Activated CD4-positive, alpha-beta memory T cell treated with anti-CD3 and anti-CD28 coated beads, Interleukin-2, amount 10 ng/mL, durations not matched to agents 7 days and 5 days (primary cell): ENCODE measurements at regions of chr5 and their contacts with region 1.

Region 1: GRCh38 chr5:159106569-159107282 is 7.0 kb upstream of the EBF1 start:
- DNase-seq: peak; percentile 72
- H3K4me3 Mint-ChIP-seq: peak overlapping the region; percentile 53
- H3K27ac Mint-ChIP-seq: no peak overlapping the region
- H3K4me1 Mint-ChIP-seq: peaks cover 19% of the 10 kb centered on the region
- H3K27me3 Mint-ChIP-seq: peaks cover 74% of the 10 kb centered on the region

Region 2: GRCh38 chr5:158074992-158075769 is 1031.5 kb before region 1 on chr5:
- CTCF ChIA-PET with region 1: interaction called, 22 read pairs
- POLR2A ChIA-PET with region 1: no interaction called
- DNase-seq: peak; percentile 46
- H3K4me3 Mint-ChIP-seq: no peak overlapping the region
- H3K27ac Mint-ChIP-seq: no peak overlapping the region
- H3K4me1 Mint-ChIP-seq: no peaks in the 10 kb centered on the region
- H3K27me3 Mint-ChIP-seq: peaks cover 26% of the 10 kb centered on the region

Region 3: GRCh38 chr5:158174918-158175851 is 931.5 kb before region 1 on chr5:
- CTCF ChIA-PET with region 1: interaction called, 18 read pairs
- POLR2A ChIA-PET with region 1: no interaction called
- DNase-seq: peak; percentile 47
- H3K4me3 Mint-ChIP-seq: no peak overlapping the region
- H3K27ac Mint-ChIP-seq: no peak overlapping the region
- H3K4me1 Mint-ChIP-seq: no peaks in the 10 kb centered on the region
- H3K27me3 Mint-ChIP-seq: no peaks in the 10 kb centered on the region

Region 4: DNA sequence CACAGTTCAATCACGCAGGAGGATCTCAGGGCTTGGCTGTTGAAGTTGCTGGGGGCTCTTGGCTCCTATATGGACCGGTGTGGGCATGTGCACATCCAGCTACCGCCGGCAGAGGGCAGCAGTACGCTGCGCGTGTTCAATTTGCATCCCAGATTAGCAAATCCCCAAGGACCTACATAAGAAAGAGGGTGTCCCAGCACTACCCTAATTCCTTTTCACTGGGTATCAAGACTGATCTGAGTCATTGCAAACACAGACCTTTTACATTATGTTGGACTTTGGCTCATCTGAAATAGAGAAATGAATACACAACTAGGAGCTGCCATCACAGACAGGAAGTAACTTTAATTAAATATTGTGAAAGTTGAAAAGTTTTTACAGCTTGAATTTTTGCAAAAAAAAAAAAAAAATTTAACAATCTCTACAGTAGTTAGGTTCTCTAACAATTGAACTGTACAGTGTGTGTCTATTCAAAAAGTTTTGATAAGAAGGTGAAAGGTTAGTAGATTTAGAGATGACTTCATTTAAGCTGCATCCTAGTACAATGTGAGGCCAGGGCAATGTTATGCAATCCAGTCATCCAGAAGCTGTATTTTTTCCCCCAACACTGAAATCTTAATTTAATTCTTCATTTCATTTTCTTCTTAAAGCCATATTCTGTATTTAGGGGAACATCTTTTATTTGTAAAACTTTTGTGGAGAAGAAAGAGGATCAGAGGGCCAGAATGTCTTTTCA is 411.0 kb before region 1 on chr5:
- CTCF ChIA-PET with region 1: interaction called, 246 read pairs
- POLR2A ChIA-PET with region 1: interaction called, 11 read pairs
- DNase-seq: peak; percentile 66
- H3K4me3 Mint-ChIP-seq: no peak overlapping the region
- H3K27ac Mint-ChIP-seq: no peak overlapping the region
- H3K4me1 Mint-ChIP-seq: no peaks in the 10 kb centered on the region
- H3K27me3 Mint-ChIP-seq: peaks cover 14% of the 10 kb centered on the region

Region 5: DNA sequence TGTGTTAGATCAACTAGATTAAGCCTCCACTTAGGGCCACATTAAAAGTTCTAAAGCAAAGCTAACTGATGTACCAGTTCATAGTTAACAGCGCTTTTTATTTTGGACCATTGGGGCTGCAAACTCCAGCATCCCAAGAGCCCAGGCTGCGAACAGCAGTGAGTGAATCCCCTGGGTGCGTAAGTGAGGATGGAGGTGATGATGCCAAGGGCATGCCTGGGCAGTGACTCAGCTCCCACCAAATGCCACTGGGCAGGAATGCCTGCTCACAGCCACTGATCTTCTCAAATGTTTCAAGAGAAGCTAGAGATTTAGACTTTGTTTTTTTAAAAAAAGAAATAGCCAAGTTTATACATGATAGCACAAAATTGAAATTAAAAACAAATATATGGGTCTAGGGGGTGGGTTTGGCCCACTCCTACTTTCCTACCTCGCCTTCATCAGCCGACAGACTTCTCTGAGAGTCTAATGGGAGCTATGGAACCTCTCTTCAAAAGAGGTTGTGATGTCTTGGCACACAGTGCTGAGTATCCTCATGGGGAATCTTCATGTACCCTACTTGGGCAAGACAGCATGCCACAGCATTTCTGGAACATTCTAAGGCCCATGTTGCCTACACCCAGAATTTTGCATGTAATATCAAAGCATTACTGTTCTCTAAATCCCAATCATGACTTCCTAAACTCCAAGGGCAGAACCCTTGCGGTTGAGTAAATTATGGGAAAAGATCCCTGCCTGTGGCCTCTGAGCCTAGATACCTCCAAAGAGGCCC is 405.1 kb before region 1 on chr5:
- CTCF ChIA-PET with region 1: interaction called, 246 read pairs
- POLR2A ChIA-PET with region 1: no interaction called
- DNase-seq: no peak
- H3K4me3 Mint-ChIP-seq: no peak overlapping the region
- H3K27ac Mint-ChIP-seq: no peak overlapping the region
- H3K4me1 Mint-ChIP-seq: no peaks in the 10 kb centered on the region
- H3K27me3 Mint-ChIP-seq: peaks cover 7% of the 10 kb centered on the region

Region 6: GRCh38 chr5:159120446-159120845 is 13.7 kb after region 1 on chr5:
- CTCF ChIA-PET with region 1: interaction called, 12 read pairs
- POLR2A ChIA-PET with region 1: interaction called, 5 read pairs
- DNase-seq: no peak
- H3K4me3 Mint-ChIP-seq: peak overlapping the region; percentile 50
- H3K27ac Mint-ChIP-seq: peak overlapping the region; percentile 87
- H3K4me1 Mint-ChIP-seq: peaks cover 23% of the 10 kb centered on the region
- H3K27me3 Mint-ChIP-seq: peaks cover 14% of the 10 kb centered on the region

Region 7: DNA sequence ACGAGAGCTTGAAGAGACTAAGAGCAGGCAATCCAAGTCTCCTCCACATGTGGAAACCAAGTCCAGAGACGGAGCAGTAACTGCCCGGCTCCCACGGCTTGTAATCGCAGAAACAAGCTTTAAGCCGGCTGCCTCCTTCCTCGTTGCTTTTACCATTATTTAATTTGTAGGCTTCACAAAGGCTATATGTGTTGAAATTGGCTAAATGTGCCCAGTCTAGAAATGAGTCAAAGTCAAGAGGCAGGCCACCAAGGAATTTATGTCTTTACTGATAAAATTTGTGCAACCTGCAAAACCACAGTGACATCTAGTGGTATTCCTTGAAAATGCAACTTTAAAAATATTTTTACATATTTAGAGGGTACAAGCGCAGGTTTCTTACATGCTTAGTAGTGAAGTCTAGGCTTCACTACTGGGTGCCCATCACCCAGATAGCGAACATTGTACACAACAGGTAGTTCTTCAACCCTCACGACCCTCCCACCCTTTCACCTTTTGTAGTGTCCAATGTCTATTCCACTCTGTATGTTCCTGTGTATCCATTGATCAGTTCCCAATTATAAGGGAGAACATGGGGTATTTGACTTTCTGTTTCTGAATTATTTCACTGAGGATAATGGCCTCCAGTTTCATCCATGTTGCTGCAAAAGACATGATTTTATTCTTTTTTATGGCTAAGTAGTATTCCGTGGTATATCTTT is 26.5 kb after region 1 on chr5:
- CTCF ChIA-PET with region 1: interaction called, 29 read pairs
- POLR2A ChIA-PET with region 1: no interaction called
- DNase-seq: no peak
- H3K4me3 Mint-ChIP-seq: no peak overlapping the region
- H3K27ac Mint-ChIP-seq: no peak overlapping the region
- H3K4me1 Mint-ChIP-seq: no peaks in the 10 kb centered on the region
- H3K27me3 Mint-ChIP-seq: peaks cover 23% of the 10 kb centered on the region

Region 8: DNA sequence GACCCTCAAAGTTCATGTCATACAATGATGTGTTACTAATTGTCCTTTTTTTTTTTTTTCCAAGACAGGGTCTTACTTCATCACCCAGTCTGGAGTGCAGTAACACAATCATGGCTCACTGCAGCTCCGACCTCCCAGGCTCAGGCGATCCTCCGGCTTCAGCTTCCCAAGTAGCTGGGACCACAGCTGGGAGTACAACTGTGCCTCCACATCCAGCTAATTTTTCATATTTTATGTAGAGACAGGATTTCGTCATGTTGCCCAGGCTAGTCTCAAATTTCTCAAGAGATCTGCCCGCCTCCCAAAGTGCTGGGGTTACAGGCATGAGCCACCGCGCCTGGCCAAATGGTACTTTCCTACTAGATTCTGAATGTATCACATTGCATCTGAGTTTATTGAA is 42.4 kb after region 1 on chr5:
- CTCF ChIA-PET with region 1: no interaction called
- POLR2A ChIA-PET with region 1: no interaction called
- DNase-seq: no peak
- H3K4me3 Mint-ChIP-seq: no peak overlapping the region
- H3K27ac Mint-ChIP-seq: no peak overlapping the region
- H3K4me1 Mint-ChIP-seq: no peaks in the 10 kb centered on the region
- H3K27me3 Mint-ChIP-seq: peaks cover 22% of the 10 kb centered on the region